ENCODE measurements at regions of chr11 and their contacts with region 1.

Region 1: DNA sequence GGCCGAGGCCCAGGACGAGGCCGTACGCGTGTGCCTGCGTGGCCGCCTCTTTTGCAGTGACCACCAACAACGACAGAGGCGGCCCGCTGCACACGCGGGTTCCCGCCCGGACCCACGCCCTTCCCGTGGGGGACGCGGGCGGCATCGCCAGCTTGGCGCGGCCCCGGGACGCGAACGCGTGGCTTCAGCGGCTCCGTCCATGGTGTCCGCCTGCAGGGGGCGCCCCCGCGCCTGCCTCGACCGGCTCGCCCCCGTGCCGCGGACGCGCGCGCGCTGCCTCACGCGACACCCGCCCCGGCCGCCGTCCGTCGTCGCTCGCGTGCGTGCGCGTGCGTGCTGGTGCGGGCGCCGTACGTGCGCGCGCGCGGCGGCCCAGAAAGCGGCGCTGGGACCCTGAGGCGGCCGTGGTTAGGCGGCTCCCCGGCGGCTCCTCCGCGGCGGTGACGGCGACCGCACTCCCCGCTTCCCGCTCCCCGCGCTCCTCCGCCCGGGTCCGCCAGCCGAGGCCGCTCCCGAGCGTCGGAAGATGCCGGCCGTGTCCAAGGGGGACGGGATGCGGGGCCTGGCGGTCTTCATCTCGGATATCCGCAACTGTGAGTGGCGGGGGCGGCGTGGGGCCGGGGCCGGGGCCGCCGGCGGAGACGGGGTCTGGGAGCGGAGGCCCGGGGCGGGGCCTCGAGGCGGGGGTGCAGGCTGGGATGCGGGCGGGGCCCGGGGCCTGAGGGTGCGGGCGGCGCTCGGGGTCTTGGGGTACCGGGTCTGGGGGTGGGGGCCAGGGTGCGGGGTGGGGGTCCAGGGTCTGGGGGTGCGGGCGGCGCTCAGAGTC is at the start of gene AP2A2:
- DNase-seq: peak; percentile 83 to 98 (median 92)
- ATAC-seq: peak; percentile 92 to 97 (median 94)
- H3K4me3 ChIP-seq: peak within 1 kb of the TSS; percentile 49 to 75 (median 60)
- H3K27ac ChIP-seq: peak within 1 kb of the TSS; percentile 35 to 81 (median 68)
- H3K4me1 ChIP-seq: peaks cover 0 to 22% (median 8%) of the 10 kb centered on the region in 3 donors
- H3K27me3 ChIP-seq: no peaks in the 10 kb centered on the region
- CTCF ChIP-seq: peak; percentile 57 to 76 (median 66)
- total RNA-seq, gene AP2A2: 40.0 to 60.2 (median 53.2) TPM

Region 2: GRCh38 chr11:1041936-1042608 is 116.4 kb after region 1 on chr11:
- intact Hi-C with region 1: loop called in 1 of 3 experiments (anchors 5 kb)
- DNase-seq: peak; percentile 75 to 93 (median 80)
- ATAC-seq: peak; percentile 63 to 88 (median 76)
- H3K4me3 ChIP-seq: no peak overlapping the region
- H3K27ac ChIP-seq: peak overlapping the region; percentile 70 to 84 (median 80)
- H3K4me1 ChIP-seq: peaks cover 16 to 25% (median 20%) of the 10 kb centered on the region in 3 donors
- H3K27me3 ChIP-seq: no peaks in the 10 kb centered on the region
- CTCF ChIP-seq: no peak

Region 3: GRCh38 chr11:1389103-1389931 is 463.6 kb after region 1 on chr11:
- intact Hi-C with region 1: no loop called
- DNase-seq: peak; percentile 97 to 100 (median 98)
- ATAC-seq: peak; percentile 84 to 96 (median 88)
- H3K4me3 ChIP-seq: peak overlapping the region; percentile 20 to 55 (median 41)
- H3K27ac ChIP-seq: peak overlapping the region in 1 of 4 donors; percentile 39
- H3K4me1 ChIP-seq: peaks cover 0 to 5% (median 5%) of the 10 kb centered on the region in 3 donors
- H3K27me3 ChIP-seq: no peaks in the 10 kb centered on the region
- CTCF ChIP-seq: no peak

Measured in pancreas (tissue), 10 donors.